MCF 10A (cell line): ENCODE measurements at regions of chr18 and their contacts with region 1.

Region 1: GRCh38 chr18:68925268-68925667 is 127.4 kb downstream of the CCDC102B start:
- DNase-seq: peak; percentile 8
- H3K4me3 Mint-ChIP-seq: no peak overlapping the region
- H3K27ac Mint-ChIP-seq: no peak overlapping the region
- H3K4me1 Mint-ChIP-seq: no peaks in the 10 kb centered on the region
- H3K27me3 Mint-ChIP-seq: peaks cover 25% of the 10 kb centered on the region
- CTCF ChIP-seq: no peak

Region 2: GRCh38 chr18:68935686-68936085 is 10.4 kb after region 1 on chr18:
- CTCF ChIA-PET with region 1: interaction called, 11 read pairs
- POLR2A ChIA-PET with region 1: interaction called, 3 read pairs
- intact Hi-C with region 1: no loop called
- DNase-seq: no peak
- H3K4me3 Mint-ChIP-seq: no peak overlapping the region
- H3K27ac Mint-ChIP-seq: no peak overlapping the region
- H3K4me1 Mint-ChIP-seq: no peaks in the 10 kb centered on the region
- H3K27me3 Mint-ChIP-seq: peaks cover 14% of the 10 kb centered on the region
- CTCF ChIP-seq: no peak

Region 3: GRCh38 chr18:70082430-70082829 is 1157.2 kb after region 1 on chr18:
- CTCF ChIA-PET with region 1: no interaction called
- POLR2A ChIA-PET with region 1: no interaction called
- intact Hi-C with region 1: loop called (anchors 10 kb)
- DNase-seq: no peak
- H3K4me3 Mint-ChIP-seq: no peak overlapping the region
- H3K27ac Mint-ChIP-seq: no peak overlapping the region
- H3K4me1 Mint-ChIP-seq: no peaks in the 10 kb centered on the region
- H3K27me3 Mint-ChIP-seq: no peaks in the 10 kb centered on the region
- CTCF ChIP-seq: no peak